ENCODE measurements at regions of chr9 and their contacts with region 1.

Region 1: GRCh38 chr9:98192503-98193335 is at the start of gene CORO2A:
- DNase-seq: peak; percentile 36 to 86 (median 66)
- ATAC-seq: peak; percentile 65
- H3K4me3 ChIP-seq: peak within 1 kb of the TSS; percentile 80
- H3K4me3 Mint-ChIP-seq: peak within 1 kb of the TSS; percentile 89
- H3K27ac ChIP-seq: peak within 1 kb of the TSS in 1 of 2 donors; percentile 30
- H3K27ac Mint-ChIP-seq: peak within 1 kb of the TSS; percentile 76
- H3K4me1 ChIP-seq: peaks cover 31% of the 10 kb centered on the region
- H3K4me1 Mint-ChIP-seq: peaks cover 44% of the 10 kb centered on the region
- H3K27me3 ChIP-seq: no peaks in the 10 kb centered on the region
- H3K27me3 Mint-ChIP-seq: no peaks in the 10 kb centered on the region
- CTCF ChIP-seq: peak; percentile 29
- total RNA-seq, gene CORO2A: 6.8 to 8.5 TPM

Region 2: DNA sequence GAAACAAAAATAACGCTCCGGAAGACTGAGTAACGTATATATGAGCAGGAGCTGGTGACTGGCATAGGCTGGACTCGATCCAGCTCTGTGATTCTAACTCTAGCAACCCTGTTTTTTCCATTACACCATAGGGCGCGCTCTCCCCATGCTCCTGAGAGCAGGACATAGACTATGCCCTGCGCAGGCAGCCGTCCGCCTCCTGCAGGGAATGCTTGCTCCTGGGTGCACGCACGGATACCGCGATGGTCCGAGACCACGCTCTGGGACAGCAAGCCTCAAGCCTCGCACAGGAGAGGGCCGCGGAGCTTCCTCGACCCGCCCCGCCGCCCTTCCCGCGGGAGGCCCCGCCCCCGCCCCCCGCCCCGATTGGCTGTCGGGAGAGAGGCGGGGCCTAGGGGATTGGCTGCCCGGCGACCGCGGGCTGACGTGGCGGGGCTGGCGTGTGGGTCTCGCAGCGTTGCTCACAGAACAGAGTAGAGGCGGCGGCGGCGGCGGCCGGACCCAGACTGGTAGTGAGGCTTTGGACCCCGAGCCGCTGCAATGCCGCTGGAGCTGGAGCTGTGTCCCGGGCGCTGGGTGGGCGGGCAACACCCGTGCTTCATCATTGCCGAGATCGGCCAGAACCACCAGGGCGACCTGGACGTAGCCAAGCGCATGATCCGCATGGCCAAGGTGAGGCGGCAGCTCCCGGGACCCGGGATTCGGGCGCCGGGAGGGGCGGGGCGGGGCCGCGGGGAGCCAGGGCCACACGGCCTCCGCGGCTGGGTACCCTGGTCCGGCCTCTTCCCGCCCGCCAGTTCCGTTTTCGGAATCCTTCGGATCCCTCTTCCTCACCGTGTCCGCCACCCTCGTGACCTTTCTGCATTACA is 136.2 kb before region 1 on chr9 and contains the start of gene NANS:
- CTCF ChIA-PET with region 1: no interaction called
- POLR2A ChIA-PET with region 1: interaction called, 6 read pairs
- intact Hi-C with region 1: loop called in 1 of 2 experiments (anchors 5 kb)
- DNase-seq: peak; percentile 81 to 95 (median 88)
- ATAC-seq: peak; percentile 92
- H3K4me3 ChIP-seq: peak within 1 kb of the TSS; percentile 71
- H3K4me3 Mint-ChIP-seq: peak within 1 kb of the TSS; percentile 98
- H3K27ac ChIP-seq: peak within 1 kb of the TSS; percentile 64 to 75
- H3K27ac Mint-ChIP-seq: peak within 1 kb of the TSS; percentile 93
- H3K4me1 ChIP-seq: peaks cover 27% of the 10 kb centered on the region
- H3K4me1 Mint-ChIP-seq: peaks cover 28% of the 10 kb centered on the region
- H3K27me3 ChIP-seq: no peaks in the 10 kb centered on the region
- H3K27me3 Mint-ChIP-seq: no peaks in the 10 kb centered on the region
- CTCF ChIP-seq: no peak
- total RNA-seq, gene NANS: 70.5 to 74.0 TPM

Region 3: DNA sequence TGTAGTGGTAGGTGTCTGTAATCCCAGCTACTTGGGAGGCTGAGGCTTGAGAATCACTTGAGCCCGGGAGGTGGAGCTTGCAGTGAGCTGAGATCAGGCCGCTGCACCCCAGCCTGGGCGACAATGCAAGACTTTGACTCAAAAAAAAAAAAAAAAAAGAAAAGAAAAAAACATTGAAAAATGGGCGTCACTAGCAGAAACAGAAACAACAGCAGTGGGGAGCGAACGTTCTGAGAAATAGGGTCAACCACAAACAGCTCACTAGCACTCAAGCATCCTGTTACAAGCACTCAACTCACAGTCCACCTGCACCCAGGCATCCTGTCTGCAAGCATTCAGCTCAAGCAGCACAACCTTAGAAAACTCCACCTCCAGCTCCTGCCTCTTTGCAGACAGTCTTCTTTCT is 90.8 kb before region 1 on chr9:
- CTCF ChIA-PET with region 1: interaction called, 3 read pairs
- POLR2A ChIA-PET with region 1: interaction called, 12 read pairs
- intact Hi-C with region 1: no loop called
- DNase-seq: peak; percentile 63 to 96 (median 80)
- ATAC-seq: peak; percentile 94
- H3K4me3 ChIP-seq: peak overlapping the region; percentile 34
- H3K4me3 Mint-ChIP-seq: peak overlapping the region; percentile 71
- H3K27ac ChIP-seq: peak overlapping the region; percentile 74 to 79
- H3K27ac Mint-ChIP-seq: peak overlapping the region; percentile 91
- H3K4me1 ChIP-seq: peaks cover 95% of the 10 kb centered on the region
- H3K4me1 Mint-ChIP-seq: peaks cover 84% of the 10 kb centered on the region
- H3K27me3 ChIP-seq: no peaks in the 10 kb centered on the region
- H3K27me3 Mint-ChIP-seq: no peaks in the 10 kb centered on the region
- CTCF ChIP-seq: no peak

Region 4: DNA sequence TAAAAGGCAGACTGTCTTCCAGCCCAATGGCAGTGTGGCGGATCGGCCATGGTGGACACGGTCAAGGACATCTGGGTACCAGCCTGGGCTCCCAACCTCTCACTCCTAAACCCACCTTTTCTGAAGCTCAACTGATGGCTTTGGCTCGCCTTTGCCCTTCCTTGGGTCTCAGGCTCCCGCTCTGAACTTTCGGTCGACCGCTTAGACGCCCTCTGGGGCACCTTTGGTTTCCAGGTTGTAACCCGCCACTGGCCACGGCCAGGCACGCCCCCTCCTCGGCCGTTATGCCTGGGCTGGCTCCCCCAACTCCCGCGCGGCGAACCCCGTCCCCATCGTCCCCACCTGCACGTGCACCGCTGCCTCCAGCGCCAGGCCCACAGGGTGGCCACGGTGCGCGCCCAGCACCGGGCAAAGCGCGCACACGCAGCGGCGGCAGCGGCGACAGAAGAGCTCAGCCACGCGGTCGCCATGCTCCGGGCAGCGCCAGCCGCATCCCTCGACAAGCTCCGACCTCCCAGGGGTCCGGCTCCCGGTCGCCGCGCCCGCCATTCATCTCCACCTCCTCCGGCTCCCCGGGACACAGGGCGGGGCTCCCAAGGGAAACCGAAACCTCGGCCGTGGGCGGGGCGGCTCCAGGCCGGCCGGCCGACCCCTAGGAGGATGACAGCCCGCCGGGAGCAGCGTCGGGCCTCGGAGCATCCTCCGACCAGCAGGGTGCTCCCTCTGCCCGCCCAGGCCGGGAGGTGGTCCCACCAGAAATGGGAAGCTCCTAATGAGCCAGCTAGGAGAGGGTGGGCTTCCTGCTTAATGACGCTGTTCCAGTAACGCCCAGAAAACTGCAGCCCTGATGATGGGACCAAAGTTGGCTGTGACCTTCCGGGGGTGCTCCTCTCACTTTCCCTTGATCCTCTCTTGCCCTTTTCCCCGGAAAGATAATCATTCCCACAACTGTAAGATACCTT is 73.8 kb before region 1 on chr9 and contains the start of gene TRIM14:
- CTCF ChIA-PET with region 1: interaction called, 4 read pairs
- POLR2A ChIA-PET with region 1: interaction called, 18 read pairs
- intact Hi-C with region 1: loop called (anchors 2 to 5 kb)
- DNase-seq: peak in 12 of 14 experiments; percentile 28 to 74 (median 46)
- ATAC-seq: peak; percentile 38
- H3K4me3 ChIP-seq: peak within 1 kb of the TSS; percentile 89
- H3K4me3 Mint-ChIP-seq: peak within 1 kb of the TSS; percentile 90
- H3K27ac ChIP-seq: peak within 1 kb of the TSS; percentile 79 to 84
- H3K27ac Mint-ChIP-seq: peak within 1 kb of the TSS; percentile 95
- H3K4me1 ChIP-seq: peaks cover 66% of the 10 kb centered on the region
- H3K4me1 Mint-ChIP-seq: peaks cover 65% of the 10 kb centered on the region
- H3K27me3 ChIP-seq: no peaks in the 10 kb centered on the region
- H3K27me3 Mint-ChIP-seq: no peaks in the 10 kb centered on the region
- CTCF ChIP-seq: no peak
- total RNA-seq, gene TRIM14: 23.5 to 23.6 TPM

Region 5: DNA sequence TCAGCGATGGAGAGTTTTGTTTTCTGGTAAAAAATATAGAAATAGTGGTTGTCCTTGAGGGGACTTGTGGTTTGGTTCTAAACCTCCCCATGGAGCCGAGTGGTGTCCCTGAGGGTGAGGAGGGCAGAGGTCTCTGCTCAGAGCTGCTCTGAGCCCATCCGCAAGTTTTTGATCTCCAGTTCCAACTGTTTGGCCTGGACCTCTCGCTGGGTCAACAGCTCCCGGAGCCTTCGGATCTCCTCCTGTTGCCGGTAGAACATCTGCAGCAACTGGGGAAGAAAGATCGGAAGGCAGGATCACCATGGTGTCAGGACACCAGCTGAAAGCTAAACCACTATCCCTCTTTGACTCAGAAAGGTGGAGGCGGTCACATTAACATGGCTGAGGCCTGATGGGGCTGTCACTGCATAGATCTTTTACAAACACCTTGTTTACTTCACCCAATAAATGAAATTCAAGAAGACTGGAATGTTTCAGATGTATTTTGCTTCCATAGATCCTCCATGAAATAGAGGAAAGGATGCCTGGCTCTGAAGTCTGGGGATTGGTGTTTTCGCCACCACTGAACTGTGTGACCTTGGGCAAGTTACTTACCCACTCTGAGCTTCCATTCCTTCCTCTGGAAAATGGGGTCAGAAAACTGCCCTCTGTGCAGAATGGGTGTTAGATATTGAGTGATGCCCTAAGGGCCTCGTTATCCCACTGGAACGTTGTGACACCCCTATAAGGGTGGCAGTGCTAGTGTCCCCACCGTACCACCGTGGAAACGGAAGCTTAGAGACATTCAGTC is 67.9 kb before region 1 on chr9:
- CTCF ChIA-PET with region 1: interaction called, 4 read pairs
- POLR2A ChIA-PET with region 1: interaction called, 18 read pairs
- intact Hi-C with region 1: loop called in 1 of 2 experiments (anchors 2 kb)
- DNase-seq: no peak
- ATAC-seq: no peak
- H3K4me3 ChIP-seq: no peak overlapping the region
- H3K4me3 Mint-ChIP-seq: no peak overlapping the region
- H3K27ac ChIP-seq: no peak overlapping the region
- H3K27ac Mint-ChIP-seq: no peak overlapping the region
- H3K4me1 ChIP-seq: peaks cover 32% of the 10 kb centered on the region
- H3K4me1 Mint-ChIP-seq: peaks cover 32% of the 10 kb centered on the region
- H3K27me3 ChIP-seq: no peaks in the 10 kb centered on the region
- H3K27me3 Mint-ChIP-seq: no peaks in the 10 kb centered on the region
- CTCF ChIP-seq: no peak

Region 6: DNA sequence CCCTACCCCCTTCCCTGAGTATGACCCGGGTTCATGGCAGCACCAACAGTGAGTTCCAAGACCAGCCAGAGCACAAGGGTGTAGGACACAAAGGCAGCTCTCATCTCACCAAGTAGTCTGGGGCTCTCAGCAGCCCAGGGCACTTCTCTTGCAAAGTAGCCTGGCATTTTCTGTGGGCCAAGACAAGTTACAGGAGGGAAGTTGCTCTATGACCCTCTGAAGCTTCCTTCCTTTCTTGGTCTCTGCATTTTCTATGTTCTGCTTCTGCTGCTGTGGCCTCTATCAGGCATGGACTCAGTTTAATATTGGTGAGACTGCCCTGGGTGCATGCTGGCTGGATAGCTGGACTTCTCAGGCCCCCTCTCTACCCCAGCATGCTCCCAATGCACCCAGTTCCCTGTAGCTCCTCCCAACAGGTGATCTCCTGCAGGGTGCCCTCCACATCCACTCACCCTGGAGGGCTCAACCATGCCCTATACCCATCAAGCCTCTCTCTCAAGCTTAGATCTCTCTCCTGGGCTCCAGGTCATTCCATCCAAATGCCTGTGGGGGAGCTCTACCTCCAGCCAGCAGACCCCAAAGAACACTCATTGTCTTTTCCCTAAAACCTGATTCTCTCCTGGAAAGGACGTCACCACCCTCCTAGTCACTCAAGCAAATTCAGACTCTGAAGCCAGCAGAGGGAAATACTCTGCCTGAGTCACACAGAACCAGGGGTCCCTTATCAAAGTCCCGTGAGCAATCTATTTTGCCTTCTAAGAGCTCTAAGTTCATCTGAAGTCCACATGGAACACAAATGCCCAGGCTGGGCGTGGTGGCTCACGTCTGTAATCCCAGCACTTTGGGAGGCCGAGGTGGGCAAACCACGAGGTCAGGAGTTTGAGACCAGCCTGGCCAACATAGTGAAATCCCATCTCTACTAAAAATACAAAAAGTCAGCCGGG is 48.9 kb after region 1 on chr9:
- CTCF ChIA-PET with region 1: no interaction called
- POLR2A ChIA-PET with region 1: no interaction called
- intact Hi-C with region 1: loop called in 1 of 2 experiments (anchors 1 kb)
- DNase-seq: no peak
- ATAC-seq: no peak
- H3K4me3 ChIP-seq: no peak overlapping the region
- H3K4me3 Mint-ChIP-seq: no peak overlapping the region
- H3K27ac ChIP-seq: no peak overlapping the region
- H3K27ac Mint-ChIP-seq: no peak overlapping the region
- H3K4me1 ChIP-seq: peaks cover 6% of the 10 kb centered on the region
- H3K4me1 Mint-ChIP-seq: peaks cover 7% of the 10 kb centered on the region
- H3K27me3 ChIP-seq: no peaks in the 10 kb centered on the region
- H3K27me3 Mint-ChIP-seq: no peaks in the 10 kb centered on the region
- CTCF ChIP-seq: no peak